CD8-positive, alpha-beta T cell (primary cell): ENCODE measurements at regions of chr1 and their contacts with region 1.

Region 1: GRCh38 chr1:226121587-226122400 is 59.3 kb downstream of the H3-3A start:
- DNase-seq: peak; percentile 44 to 86 (median 75)
- ATAC-seq: peak; percentile 59
- H3K4me3 ChIP-seq: peak overlapping the region; percentile 48 to 61
- H3K4me3 Mint-ChIP-seq: peak overlapping the region; percentile 83
- H3K27ac ChIP-seq: peak overlapping the region; percentile 57 to 70
- H3K27ac Mint-ChIP-seq: peak overlapping the region; percentile 71
- H3K4me1 ChIP-seq: peaks cover 23% of the 10 kb centered on the region
- H3K4me1 Mint-ChIP-seq: peaks cover 26% of the 10 kb centered on the region
- H3K27me3 ChIP-seq: no peaks in the 10 kb centered on the region
- H3K27me3 Mint-ChIP-seq: no peaks in the 10 kb centered on the region
- CTCF ChIP-seq: peak; percentile 82

Region 2: DNA sequence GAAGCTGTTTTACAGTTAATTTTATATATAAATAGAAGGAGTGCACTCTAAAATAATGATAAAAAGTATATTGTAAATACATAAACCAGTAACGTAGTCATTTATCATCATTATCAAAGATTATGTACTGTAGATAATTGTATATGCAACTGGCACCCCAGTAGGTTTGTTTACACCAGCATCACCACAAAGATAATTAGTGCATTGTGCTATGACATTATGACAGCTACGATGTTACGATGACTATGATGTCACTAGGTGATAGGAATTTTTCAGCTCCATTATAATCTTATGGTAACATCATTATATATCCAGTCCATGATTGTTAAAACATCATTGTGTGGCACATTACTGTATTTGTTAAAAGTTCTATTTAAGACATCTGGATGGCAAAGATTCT is 879.2 kb before region 1 on chr1:
- CTCF ChIA-PET with region 1: no interaction called
- POLR2A ChIA-PET with region 1: no interaction called
- intact Hi-C with region 1: no loop called
- DNase-seq: no peak
- ATAC-seq: no peak
- H3K4me3 ChIP-seq: no peak overlapping the region
- H3K4me3 Mint-ChIP-seq: no peak overlapping the region
- H3K27ac ChIP-seq: no peak overlapping the region
- H3K27ac Mint-ChIP-seq: no peak overlapping the region
- H3K4me1 ChIP-seq: no peaks in the 10 kb centered on the region
- H3K4me1 Mint-ChIP-seq: no peaks in the 10 kb centered on the region
- H3K27me3 ChIP-seq: no peaks in the 10 kb centered on the region
- H3K27me3 Mint-ChIP-seq: peaks cover 26% of the 10 kb centered on the region
- CTCF ChIP-seq: no peak

Region 3: GRCh38 chr1:225987491-225988316 is 134.1 kb before region 1 on chr1:
- CTCF ChIA-PET with region 1: interaction called, 11 read pairs
- POLR2A ChIA-PET with region 1: no interaction called
- intact Hi-C with region 1: no loop called
- DNase-seq: peak in 2 of 9 experiments; percentile 53 to 66
- ATAC-seq: peak; percentile 79
- H3K4me3 ChIP-seq: no peak overlapping the region
- H3K4me3 Mint-ChIP-seq: no peak overlapping the region
- H3K27ac ChIP-seq: no peak overlapping the region
- H3K27ac Mint-ChIP-seq: peak overlapping the region; percentile 30
- H3K4me1 ChIP-seq: peaks cover 9% of the 10 kb centered on the region
- H3K4me1 Mint-ChIP-seq: peaks cover 28% of the 10 kb centered on the region
- H3K27me3 ChIP-seq: no peaks in the 10 kb centered on the region
- H3K27me3 Mint-ChIP-seq: no peaks in the 10 kb centered on the region
- CTCF ChIP-seq: peak; percentile 74

Region 4: DNA sequence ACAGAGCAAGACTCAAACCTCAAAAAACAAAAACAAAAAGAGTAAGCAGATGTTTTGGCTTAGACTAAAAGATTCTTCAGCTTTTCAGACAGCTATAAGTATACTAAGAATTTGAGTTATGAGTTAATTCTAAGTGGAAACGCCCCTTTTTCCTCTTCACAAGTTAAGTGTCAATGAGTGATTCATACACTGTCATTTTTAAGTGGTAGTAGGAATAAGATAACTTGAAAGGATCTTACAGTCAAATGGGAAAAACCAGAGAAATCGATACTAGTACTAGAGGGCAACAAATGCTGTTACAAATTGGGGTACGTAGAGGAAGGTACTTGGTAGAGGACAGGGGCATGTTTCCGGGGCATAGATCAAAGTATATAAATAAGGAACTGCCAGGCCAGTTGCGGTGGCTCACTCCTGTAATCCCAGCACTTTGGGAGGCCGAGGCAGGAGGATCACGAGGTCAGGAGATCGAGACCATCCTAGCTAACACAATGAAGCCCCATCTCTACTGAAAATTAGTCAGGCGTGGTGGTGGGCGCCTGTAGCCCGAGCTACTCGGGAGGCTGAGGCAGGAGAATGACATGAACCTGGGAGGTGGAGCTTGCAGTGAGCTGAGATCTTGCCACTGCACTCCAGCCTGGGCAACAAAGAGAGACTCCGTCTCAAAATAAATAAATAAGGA is 51.8 kb before region 1 on chr1:
- CTCF ChIA-PET with region 1: interaction called, 61 read pairs
- POLR2A ChIA-PET with region 1: interaction called, 15 read pairs
- intact Hi-C with region 1: loop called (anchors 1 kb)
- DNase-seq: no peak
- ATAC-seq: no peak
- H3K4me3 ChIP-seq: no peak overlapping the region
- H3K4me3 Mint-ChIP-seq: peak overlapping the region; percentile 44
- H3K27ac ChIP-seq: peak overlapping the region in 1 of 2 experiments; percentile 1
- H3K27ac Mint-ChIP-seq: peak overlapping the region; percentile 68
- H3K4me1 ChIP-seq: peaks cover 59% of the 10 kb centered on the region
- H3K4me1 Mint-ChIP-seq: peaks cover 63% of the 10 kb centered on the region
- H3K27me3 ChIP-seq: no peaks in the 10 kb centered on the region
- H3K27me3 Mint-ChIP-seq: no peaks in the 10 kb centered on the region
- CTCF ChIP-seq: no peak

Region 5: DNA sequence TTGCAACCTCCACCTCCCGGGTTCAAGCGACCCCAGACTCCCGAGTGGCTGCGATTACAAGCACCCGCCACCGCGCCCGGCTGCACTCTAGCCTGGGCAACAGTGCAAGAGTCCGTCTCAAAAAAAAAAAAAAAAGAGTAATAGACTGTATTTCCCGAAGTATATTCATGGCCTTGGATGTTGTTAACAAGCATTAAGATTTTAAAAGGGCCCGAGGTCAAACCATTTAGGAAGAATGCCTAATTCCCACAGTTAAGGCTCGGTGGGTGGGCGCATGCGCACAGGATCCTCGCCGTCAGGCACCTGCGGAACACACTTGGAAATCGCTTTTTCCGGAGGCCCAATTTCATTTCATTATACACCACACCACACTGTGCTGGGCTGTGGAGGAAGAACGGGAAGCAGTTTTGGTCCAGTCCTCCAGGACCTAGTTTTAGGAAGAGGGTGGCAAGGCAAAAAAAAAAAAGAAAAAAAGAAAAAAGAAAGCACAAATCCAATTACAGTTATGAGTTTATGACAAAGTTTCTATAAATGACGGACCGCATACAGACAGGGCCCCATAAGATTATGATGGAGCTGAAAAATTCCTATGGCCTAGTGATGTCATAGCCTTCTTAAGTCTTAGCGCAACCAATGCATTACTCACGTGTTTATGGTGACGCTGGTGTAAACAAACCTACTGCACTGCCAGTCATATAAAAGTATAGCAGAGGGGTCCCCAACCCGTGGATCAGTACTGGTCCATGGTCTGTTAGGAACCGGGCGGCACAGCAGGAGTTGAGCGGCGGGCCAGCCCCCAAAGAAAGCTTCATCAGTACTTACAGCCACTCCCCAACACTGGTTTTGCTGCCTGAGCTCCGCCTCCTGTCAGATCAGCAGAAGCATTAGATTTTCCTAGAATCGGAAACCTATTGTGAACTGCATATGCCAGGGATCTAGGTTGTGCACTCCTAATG is 21.1 kb before region 1 on chr1:
- CTCF ChIA-PET with region 1: interaction called, 13 read pairs
- POLR2A ChIA-PET with region 1: interaction called, 3 read pairs
- intact Hi-C with region 1: no loop called
- DNase-seq: peak in 7 of 9 experiments; percentile 29 to 63 (median 53)
- ATAC-seq: peak; percentile 72
- H3K4me3 ChIP-seq: peak overlapping the region; percentile 50 to 53
- H3K4me3 Mint-ChIP-seq: peak overlapping the region; percentile 87
- H3K27ac ChIP-seq: no peak overlapping the region
- H3K27ac Mint-ChIP-seq: peak overlapping the region; percentile 77
- H3K4me1 ChIP-seq: peaks cover 4% of the 10 kb centered on the region
- H3K4me1 Mint-ChIP-seq: peaks cover 15% of the 10 kb centered on the region
- H3K27me3 ChIP-seq: no peaks in the 10 kb centered on the region
- H3K27me3 Mint-ChIP-seq: no peaks in the 10 kb centered on the region
- CTCF ChIP-seq: no peak

Region 6: DNA sequence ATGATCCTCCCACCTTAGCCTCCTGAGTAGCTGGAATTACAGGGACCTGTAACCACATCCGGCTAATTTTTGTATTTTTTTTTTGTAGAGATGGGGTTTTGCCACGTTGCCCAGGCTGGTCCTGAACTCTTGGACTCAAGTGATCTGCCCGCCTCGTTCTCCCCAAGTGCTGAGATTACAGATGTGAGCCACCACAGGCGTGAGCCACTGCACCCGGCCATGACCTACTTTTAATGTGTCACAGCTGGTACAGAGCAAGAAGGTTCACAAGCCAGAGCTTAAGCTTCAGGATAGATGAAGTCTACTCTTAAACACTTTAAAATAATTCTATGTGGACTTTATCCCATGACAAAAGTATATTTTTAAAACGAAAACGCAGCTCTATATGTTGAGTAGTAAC is 41.1 kb after region 1 on chr1:
- CTCF ChIA-PET with region 1: interaction called, 28 read pairs
- POLR2A ChIA-PET with region 1: interaction called, 3 read pairs
- intact Hi-C with region 1: no loop called
- DNase-seq: no peak
- ATAC-seq: no peak
- H3K4me3 ChIP-seq: no peak overlapping the region
- H3K4me3 Mint-ChIP-seq: no peak overlapping the region
- H3K27ac ChIP-seq: no peak overlapping the region
- H3K27ac Mint-ChIP-seq: no peak overlapping the region
- H3K4me1 ChIP-seq: no peaks in the 10 kb centered on the region
- H3K4me1 Mint-ChIP-seq: peaks cover 13% of the 10 kb centered on the region
- H3K27me3 ChIP-seq: no peaks in the 10 kb centered on the region
- H3K27me3 Mint-ChIP-seq: no peaks in the 10 kb centered on the region
- CTCF ChIP-seq: no peak

Region 7: DNA sequence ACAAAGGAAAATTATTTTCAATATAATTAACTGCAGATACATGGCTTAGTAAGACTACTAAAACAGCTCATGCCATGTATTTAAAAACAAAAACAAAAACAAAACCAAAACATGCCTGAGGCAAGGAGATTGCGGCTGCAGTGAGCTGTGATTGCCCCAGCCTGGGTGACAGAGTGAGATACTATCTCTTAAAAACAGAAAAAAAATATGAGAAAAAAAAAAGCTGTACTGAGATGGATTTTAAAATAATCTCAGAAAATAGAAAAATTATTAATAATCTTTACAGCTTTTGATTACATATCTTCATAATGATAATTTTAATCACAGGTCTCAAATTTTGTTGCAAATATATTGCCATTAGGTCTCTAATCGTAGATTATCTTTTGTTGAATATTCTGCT is 211.2 kb after region 1 on chr1:
- CTCF ChIA-PET with region 1: interaction called, 49 read pairs
- POLR2A ChIA-PET with region 1: no interaction called
- intact Hi-C with region 1: loop called in 1 of 2 experiments (anchors 1 kb)
- DNase-seq: peak in 2 of 9 experiments; percentile 11 to 34
- ATAC-seq: no peak
- H3K4me3 ChIP-seq: no peak overlapping the region
- H3K4me3 Mint-ChIP-seq: peak overlapping the region; percentile 65
- H3K27ac ChIP-seq: no peak overlapping the region
- H3K27ac Mint-ChIP-seq: no peak overlapping the region
- H3K4me1 ChIP-seq: peaks cover 3% of the 10 kb centered on the region
- H3K4me1 Mint-ChIP-seq: peaks cover 6% of the 10 kb centered on the region
- H3K27me3 ChIP-seq: no peaks in the 10 kb centered on the region
- H3K27me3 Mint-ChIP-seq: peaks cover 2% of the 10 kb centered on the region
- CTCF ChIP-seq: no peak

Region 8: GRCh38 chr1:226457307-226457712 is 335.5 kb after region 1 on chr1:
- CTCF ChIA-PET with region 1: no interaction called
- POLR2A ChIA-PET with region 1: no interaction called
- intact Hi-C with region 1: no loop called
- DNase-seq: peak; percentile 9 to 79 (median 60)
- ATAC-seq: peak; percentile 89
- H3K4me3 ChIP-seq: peak overlapping the region; percentile 25 to 56
- H3K4me3 Mint-ChIP-seq: peak overlapping the region; percentile 84
- H3K27ac ChIP-seq: no peak overlapping the region
- H3K27ac Mint-ChIP-seq: peak overlapping the region; percentile 77
- H3K4me1 ChIP-seq: peaks cover 17% of the 10 kb centered on the region
- H3K4me1 Mint-ChIP-seq: peaks cover 15% of the 10 kb centered on the region
- H3K27me3 ChIP-seq: no peaks in the 10 kb centered on the region
- H3K27me3 Mint-ChIP-seq: no peaks in the 10 kb centered on the region
- CTCF ChIP-seq: peak; percentile 51